ENCODE measurements at regions of chr12 and their contacts with region 1.

Region 1: GRCh38 chr12:1544996-1545700 is 49.2 kb downstream of the FBXL14 start:
- DNase-seq: peak; percentile 68
- ATAC-seq: no peak
- H3K4me3 ChIP-seq: no peak overlapping the region
- H3K27ac ChIP-seq: no peak overlapping the region
- H3K4me1 ChIP-seq: peaks cover 19% of the 10 kb centered on the region
- H3K27me3 ChIP-seq: no peaks in the 10 kb centered on the region
- CTCF ChIP-seq: peak; percentile 66

Region 2: GRCh38 chr12:1117970-1118563 is 427.1 kb before region 1 on chr12:
- CTCF ChIA-PET with region 1: interaction called, 5 read pairs
- POLR2A ChIA-PET with region 1: no interaction called
- intact Hi-C with region 1: loop called (anchors 1 kb)
- DNase-seq: peak; percentile 80
- ATAC-seq: peak; percentile 25; the same call in 1 of the 2 replicates
- H3K4me3 ChIP-seq: no peak overlapping the region
- H3K27ac ChIP-seq: no peak overlapping the region
- H3K4me1 ChIP-seq: peaks cover 43% of the 10 kb centered on the region
- H3K27me3 ChIP-seq: no peaks in the 10 kb centered on the region
- CTCF ChIP-seq: peak; percentile 87

Region 3: DNA sequence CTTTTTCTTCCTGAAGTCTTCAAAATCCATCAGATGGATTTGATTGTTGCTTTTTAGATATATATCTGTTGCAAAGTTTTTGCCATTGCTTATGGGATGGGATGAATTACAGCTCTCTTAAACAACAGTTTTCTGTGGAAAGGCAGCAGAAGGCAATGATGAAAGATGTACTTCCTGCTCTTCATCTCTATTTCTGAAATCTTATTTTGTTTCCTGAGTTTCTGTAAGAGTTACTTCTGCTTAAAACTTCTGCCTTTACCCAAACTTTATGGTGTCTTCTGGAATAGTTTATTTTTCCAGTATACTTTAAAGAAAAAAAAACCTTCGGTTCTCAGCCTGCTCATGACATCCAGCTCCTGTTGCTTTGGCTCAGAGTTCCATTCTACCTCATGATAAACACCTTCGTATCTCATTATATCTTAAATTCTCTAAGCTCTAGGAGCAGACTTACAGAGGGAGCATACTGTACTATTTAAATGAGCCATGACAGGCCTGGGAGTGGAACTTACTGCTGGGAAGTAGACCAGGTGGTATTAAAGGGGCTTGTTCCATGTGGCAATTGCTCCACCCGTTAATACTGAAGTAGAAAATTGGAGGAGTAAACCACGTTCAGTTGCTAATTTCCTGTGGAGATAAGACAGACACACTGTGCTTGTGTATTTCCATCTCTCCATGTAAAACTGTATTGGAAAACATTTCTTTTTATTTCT is 239.2 kb before region 1 on chr12:
- CTCF ChIA-PET with region 1: interaction called, 13 read pairs
- POLR2A ChIA-PET with region 1: interaction called, 3 read pairs
- intact Hi-C with region 1: loop called (anchors 10 kb)
- DNase-seq: no peak
- ATAC-seq: no peak
- H3K4me3 ChIP-seq: no peak overlapping the region
- H3K27ac ChIP-seq: no peak overlapping the region
- H3K4me1 ChIP-seq: peaks cover 12% of the 10 kb centered on the region
- H3K27me3 ChIP-seq: no peaks in the 10 kb centered on the region
- CTCF ChIP-seq: no peak

Region 4: GRCh38 chr12:1398673-1399072 is 146.5 kb before region 1 on chr12:
- CTCF ChIA-PET with region 1: no interaction called
- POLR2A ChIA-PET with region 1: no interaction called
- intact Hi-C with region 1: loop called (anchors 10 kb)
- DNase-seq: peak; percentile 11
- ATAC-seq: no peak
- H3K4me3 ChIP-seq: no peak overlapping the region
- H3K27ac ChIP-seq: no peak overlapping the region
- H3K4me1 ChIP-seq: no peaks in the 10 kb centered on the region
- H3K27me3 ChIP-seq: no peaks in the 10 kb centered on the region
- CTCF ChIP-seq: no peak; the same call in 1 of the 2 replicates

Region 5: GRCh38 chr12:1518591-1519541 is 26.3 kb before region 1 on chr12:
- CTCF ChIA-PET with region 1: no interaction called
- POLR2A ChIA-PET with region 1: no interaction called
- intact Hi-C with region 1: loop called (anchors 2 kb)
- DNase-seq: peak; percentile 87
- ATAC-seq: peak; percentile 85
- H3K4me3 ChIP-seq: peak overlapping the region; percentile 55; the same call in 1 of the 2 replicates
- H3K27ac ChIP-seq: no peak overlapping the region
- H3K4me1 ChIP-seq: peaks cover 29% of the 10 kb centered on the region
- H3K27me3 ChIP-seq: no peaks in the 10 kb centered on the region
- CTCF ChIP-seq: no peak

Region 6: DNA sequence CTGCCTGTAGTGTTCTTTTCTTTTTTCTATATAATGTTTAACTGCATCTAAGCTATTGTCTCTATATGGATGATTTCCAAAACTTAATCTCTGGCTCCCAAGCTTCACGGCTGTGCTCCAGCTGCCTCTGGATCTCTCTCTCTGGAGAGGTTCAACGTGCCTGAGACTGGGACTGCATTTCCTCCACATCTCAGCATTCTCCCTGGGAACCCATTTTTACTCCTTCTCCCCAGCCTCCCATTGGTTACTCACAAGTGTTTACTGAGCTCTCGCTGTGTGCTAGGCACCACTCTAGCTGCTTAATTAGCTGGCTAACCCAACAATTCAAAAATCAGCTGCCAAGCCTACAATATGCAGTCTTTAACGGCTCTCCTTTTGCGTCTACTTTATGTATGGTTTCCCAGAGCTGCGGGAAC is 14.5 kb after region 1 on chr12:
- CTCF ChIA-PET with region 1: no interaction called
- POLR2A ChIA-PET with region 1: no interaction called
- intact Hi-C with region 1: no loop called
- DNase-seq: no peak
- ATAC-seq: no peak
- H3K4me3 ChIP-seq: no peak overlapping the region
- H3K27ac ChIP-seq: no peak overlapping the region
- H3K4me1 ChIP-seq: no peaks in the 10 kb centered on the region
- H3K27me3 ChIP-seq: no peaks in the 10 kb centered on the region
- CTCF ChIP-seq: no peak

Region 7: DNA sequence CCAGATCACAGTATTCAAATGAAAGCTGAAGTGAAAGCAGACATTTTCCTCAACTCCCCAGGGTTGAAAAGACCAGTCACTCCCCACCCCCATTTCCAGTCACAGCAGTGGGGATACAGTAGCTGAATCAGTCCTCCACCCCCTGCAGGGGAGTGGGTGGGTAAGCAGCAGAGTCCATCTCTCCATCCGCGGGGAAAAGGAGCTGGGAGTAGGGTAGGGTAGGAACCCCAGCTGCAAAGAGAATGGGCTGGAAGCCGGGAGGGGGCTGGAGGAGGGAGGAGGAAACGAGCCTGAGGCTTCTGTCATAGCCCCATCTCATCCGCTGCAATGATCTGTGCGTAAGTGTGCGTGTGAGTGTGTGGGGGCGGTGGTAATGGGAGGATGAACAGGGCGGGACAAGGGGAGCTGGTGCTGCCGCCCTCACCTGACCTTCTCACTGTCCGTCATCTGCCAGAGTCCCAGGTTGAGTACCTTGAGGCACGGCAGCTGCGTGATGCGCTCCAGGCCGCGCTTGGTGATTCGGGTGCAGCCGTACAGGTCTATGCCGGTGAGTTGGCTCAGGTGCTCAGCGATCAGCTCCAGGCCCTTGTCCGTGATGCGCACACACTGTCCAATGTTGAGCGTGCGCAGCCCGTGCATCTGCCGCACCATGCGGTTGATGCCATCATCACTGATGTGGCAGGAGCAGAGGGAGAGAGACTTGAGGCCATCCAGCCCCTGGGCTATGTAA is 47.5 kb after region 1 on chr12:
- CTCF ChIA-PET with region 1: no interaction called
- POLR2A ChIA-PET with region 1: no interaction called
- intact Hi-C with region 1: no loop called
- DNase-seq: peak; percentile 50
- ATAC-seq: peak; percentile 18
- H3K4me3 ChIP-seq: peak overlapping the region; percentile 94
- H3K27ac ChIP-seq: 0 out of 2 replicates have a peak overlapping the region, but pooled peaks have one; percentile 11
- H3K4me1 ChIP-seq: peaks cover 46% of the 10 kb centered on the region
- H3K27me3 ChIP-seq: no peaks in the 10 kb centered on the region
- CTCF ChIP-seq: no peak

Measured in PC-3 (cell line).